ENCODE measurements at regions of chr7 and their contacts with region 1.

Region 1: DNA sequence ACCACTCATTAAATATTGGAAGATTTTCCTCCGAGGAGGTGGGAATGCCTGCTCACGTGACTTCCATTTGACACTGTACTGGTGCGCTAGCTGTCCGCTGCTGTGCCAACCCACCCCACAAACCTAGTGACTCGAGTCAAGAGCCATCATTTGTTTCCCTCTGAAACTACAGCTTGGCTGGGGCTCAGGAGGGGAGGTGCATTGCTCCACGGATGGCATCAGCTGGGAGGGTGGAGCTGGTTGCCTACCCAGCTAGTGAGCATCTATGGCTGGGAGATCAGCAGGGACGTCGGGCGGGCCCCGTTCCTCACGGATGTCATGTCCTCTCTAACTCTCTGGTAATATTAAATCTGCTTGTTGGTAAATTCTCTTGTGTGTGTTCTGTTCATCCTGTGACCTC is 9.5 kb upstream of the FOXL3 start:
- DNase-seq: no peak

Region 2: DNA sequence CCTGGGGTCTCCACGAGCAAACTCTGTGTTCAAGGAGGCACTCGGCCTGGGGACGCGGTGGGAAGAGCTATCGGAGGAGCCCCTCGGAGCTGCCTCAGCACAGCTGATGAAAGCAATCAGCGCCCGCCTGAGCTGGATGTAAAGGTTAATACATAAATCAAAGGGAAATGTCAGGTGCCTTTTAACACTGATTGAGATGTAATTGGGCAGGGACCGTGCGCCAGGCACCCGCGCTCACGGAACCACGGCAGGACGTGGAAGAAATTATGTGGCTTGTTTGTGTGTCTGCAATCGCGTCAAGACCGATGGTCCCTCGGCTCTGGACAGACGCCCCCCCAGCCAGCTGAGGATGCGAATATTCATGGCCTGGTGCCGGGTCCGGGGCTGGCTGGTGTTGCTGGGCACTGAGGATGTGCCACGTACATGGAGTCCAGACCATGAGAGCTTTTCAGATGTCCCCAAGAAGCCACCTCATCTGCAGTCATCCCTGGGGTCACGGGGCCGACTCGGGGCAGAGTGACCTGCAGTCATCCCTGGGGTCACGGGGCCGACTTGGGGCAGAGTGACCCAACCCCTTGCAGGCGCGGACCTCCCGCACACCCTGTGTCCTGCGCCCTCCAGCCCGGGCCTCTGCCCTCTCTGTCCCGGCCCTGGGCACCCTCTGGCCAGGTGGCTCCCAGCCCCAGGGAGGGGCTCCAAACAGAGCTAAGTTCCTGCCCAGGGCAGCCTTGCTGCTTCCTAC is 25.1 kb after region 1 on chr7:
- intact Hi-C with region 1: loop called (anchors 2 kb)
- DNase-seq: no peak

Measured in cardiac septum (tissue), 1 donor.